Activated T-helper 2 cell treated with anti-CD3 and anti-CD28 coated beads, Interferon-gamma antibody, Interleukin-2, Interleukin-4, amounts not matched to agents 10 μg/mL and 5 μg/mL and 100 μg/mL, durations not matched to agents 14 hours and 24 hours and 36 hours (primary cell): ENCODE measurements at regions of chr10 and their contacts with region 1.

Region 1: GRCh38 chr10:88932539-88933256 is 19.9 kb downstream of the ACTA2 start:
- DNase-seq: peak; percentile 27
- H3K4me3 Mint-ChIP-seq: no peak overlapping the region
- H3K27ac Mint-ChIP-seq: no peak overlapping the region
- H3K4me1 Mint-ChIP-seq: peaks cover 27% of the 10 kb centered on the region
- H3K27me3 Mint-ChIP-seq: no peaks in the 10 kb centered on the region

Region 2: DNA sequence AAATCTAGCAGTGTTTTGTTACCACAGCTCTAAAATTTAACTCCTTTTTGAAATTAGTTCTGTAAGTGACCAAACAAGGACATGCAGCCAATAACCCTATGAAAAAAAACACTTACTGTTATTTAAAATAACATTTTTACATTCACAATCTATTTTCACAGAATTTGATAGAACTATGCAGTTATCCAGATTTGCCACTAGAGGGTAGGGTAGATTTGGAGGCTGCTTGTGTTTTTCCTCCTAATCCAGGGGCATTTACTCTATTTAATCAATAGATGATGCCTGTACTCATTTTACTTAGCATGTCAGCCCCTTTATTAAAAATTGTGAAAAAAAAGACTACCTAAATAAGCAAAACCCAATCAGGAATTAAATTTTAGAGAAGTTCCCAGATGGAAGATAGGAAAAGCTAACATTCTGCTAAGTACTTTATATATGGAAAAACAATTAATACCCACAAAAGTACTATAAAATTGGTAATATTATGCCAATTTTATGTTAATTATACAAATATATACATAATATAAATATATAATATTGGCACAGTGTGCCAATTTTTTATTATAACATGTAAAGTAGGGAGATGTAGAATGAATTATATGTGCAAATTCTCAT is 244.7 kb before region 1 on chr10:
- intact Hi-C with region 1: loop called (anchors 5 kb)
- DNase-seq: no peak
- H3K4me3 Mint-ChIP-seq: no peak overlapping the region
- H3K27ac Mint-ChIP-seq: no peak overlapping the region
- H3K4me1 Mint-ChIP-seq: no peaks in the 10 kb centered on the region
- H3K27me3 Mint-ChIP-seq: peaks cover 29% of the 10 kb centered on the region

Region 3: GRCh38 chr10:88880282-88881076 is 52.2 kb before region 1 on chr10:
- intact Hi-C with region 1: loop called (anchors 5 kb)
- DNase-seq: peak; percentile 79
- H3K4me3 Mint-ChIP-seq: peak overlapping the region; percentile 97
- H3K27ac Mint-ChIP-seq: peak overlapping the region; percentile 98
- H3K4me1 Mint-ChIP-seq: peaks cover 59% of the 10 kb centered on the region
- H3K27me3 Mint-ChIP-seq: no peaks in the 10 kb centered on the region

Region 4: GRCh38 chr10:89001024-89001728 is 68.5 kb after region 1 on chr10:
- intact Hi-C with region 1: loop called (anchors 2 kb)
- DNase-seq: no peak
- H3K4me3 Mint-ChIP-seq: peak overlapping the region; percentile 58
- H3K27ac Mint-ChIP-seq: peak overlapping the region; percentile 66
- H3K4me1 Mint-ChIP-seq: peaks cover 65% of the 10 kb centered on the region
- H3K27me3 Mint-ChIP-seq: no peaks in the 10 kb centered on the region

Region 5: DNA sequence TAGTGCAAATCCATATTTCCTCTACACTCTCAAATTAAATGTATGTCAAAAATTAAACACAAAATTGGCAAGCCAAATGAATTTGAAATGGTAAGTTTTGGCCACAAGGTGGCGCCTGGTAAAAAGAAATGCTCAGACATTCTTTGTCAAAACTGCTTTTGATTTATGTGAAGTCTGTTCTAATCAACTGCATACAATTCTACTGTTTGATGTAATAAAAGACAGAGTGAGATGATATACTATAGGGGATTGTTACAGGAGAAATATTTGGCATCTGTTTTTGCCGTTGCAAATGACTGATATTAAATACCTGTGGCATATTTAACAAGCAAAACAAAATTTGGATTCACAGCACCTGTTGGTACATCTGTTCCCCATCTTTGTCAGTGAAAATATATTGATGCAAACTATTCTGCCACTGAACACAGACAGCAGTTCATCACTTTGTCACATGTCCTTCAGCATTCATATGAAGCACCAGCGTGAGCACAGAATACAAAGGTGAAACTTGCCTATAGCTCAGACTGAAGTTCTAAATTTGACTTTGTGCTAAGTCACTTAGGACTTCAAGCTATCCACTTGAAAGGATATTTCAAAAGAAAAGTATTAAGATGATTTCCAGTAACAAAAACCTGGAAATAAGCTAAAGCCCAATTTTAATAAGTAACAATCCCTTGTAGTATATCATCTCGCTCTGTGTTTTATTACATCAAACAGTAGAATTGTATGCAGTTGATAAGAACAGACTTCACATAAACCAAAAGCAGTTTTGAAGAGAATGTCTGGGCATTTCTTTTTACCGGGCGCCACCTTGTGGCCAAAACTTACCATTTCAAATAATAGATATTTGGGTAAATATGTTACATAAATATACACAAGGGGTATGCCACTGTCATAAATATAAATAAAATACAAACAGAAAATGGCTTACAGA is 284.6 kb after region 1 on chr10:
- intact Hi-C with region 1: loop called (anchors 1 kb)
- DNase-seq: peak; percentile 27
- H3K4me3 Mint-ChIP-seq: no peak overlapping the region
- H3K27ac Mint-ChIP-seq: no peak overlapping the region
- H3K4me1 Mint-ChIP-seq: peaks cover 6% of the 10 kb centered on the region
- H3K27me3 Mint-ChIP-seq: peaks cover 1% of the 10 kb centered on the region